Activated CD4-positive, alpha-beta T cell treated with anti-CD3 and anti-CD28 coated beads, Interleukin-2, amount 10 ng/mL, durations not matched to agents 7 days and 5 days (primary cell): ENCODE measurements at regions of chr17 and their contacts with region 1.

Region 1: DNA sequence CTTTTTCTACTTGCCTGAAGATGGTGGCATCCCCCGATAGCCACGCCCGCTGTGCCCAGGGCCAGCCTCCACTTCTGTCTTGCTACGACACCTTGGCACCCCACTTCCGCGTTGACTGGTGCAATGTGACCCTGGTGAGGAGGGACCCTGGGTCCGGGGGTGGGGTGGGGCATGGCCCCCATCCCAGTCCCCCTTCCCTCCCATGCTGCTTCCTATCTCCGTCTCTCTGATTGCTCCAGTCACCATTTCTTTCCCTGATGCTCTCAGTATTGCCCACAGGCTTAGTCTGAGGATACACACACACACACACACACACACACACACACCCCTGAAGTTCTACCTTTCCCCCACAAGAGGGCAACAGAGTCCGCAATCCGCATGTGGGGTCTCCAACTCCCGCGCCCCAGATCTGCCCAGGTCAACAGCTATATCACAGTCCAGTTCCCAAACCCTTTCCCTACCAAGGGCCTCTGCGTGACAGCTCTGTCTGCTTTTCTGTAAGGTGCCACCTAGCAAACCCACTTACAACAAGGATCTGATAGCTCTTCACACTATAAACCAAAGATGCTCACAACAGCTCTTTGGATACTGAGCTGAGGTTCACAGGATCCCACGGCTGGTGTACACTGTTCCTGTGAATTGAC is 3.4 kb downstream of the SGCA start:
- DNase-seq: peak; percentile 59
- H3K4me3 Mint-ChIP-seq: no peak overlapping the region
- H3K27ac Mint-ChIP-seq: peak overlapping the region; percentile 27
- H3K4me1 Mint-ChIP-seq: peaks cover 17% of the 10 kb centered on the region
- H3K27me3 Mint-ChIP-seq: no peaks in the 10 kb centered on the region

Region 2: DNA sequence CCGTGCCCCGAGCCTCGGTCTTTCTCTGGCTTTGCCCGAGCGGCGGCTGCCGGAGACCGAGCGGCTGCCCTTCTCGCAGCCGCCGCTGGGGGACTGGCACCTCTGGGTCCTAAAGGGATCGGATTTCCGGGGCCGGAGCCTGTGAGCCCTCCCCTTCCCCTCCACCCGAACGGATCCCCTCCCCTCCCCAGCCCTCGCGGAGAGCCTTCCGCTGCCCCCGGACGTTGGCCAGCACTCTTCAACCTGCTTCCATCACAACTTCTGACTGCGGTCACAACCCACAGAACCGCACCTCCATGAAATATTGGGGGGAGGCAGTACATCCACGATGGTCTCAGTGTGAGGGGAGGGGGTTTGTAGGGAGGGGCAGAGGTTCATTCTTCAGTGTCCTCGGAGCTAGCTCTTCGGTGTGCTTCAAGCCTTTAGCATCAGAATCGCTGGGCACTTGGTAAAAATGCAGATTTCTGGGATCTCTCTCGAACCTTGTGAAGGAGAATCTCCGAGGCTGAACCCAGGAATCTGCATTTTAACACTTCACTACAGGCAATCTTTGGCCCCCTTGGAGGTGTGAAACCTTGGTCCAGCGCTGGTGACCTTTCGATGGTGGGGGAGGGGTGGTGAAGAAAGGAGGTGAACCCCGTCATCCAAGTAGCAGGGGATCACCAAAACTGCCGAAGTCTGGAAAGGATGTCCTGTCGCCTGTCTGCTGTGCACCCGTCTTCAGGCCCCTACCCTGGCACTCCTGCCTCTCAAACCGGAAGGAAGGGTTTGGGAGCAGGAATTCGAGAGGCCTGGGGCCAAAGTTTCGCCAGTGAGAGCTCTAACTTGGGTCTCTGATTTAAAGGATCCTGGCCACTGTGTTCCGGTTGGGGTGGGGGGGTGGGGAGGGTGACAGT is 18.0 kb before region 1 on chr17:
- CTCF ChIA-PET with region 1: interaction called, 31 read pairs
- POLR2A ChIA-PET with region 1: no interaction called
- DNase-seq: peak; percentile 92
- H3K4me3 Mint-ChIP-seq: peak overlapping the region; percentile 89
- H3K27ac Mint-ChIP-seq: peak overlapping the region; percentile 95
- H3K4me1 Mint-ChIP-seq: peaks cover 50% of the 10 kb centered on the region
- H3K27me3 Mint-ChIP-seq: no peaks in the 10 kb centered on the region